Dorsolateral prefrontal cortex (tissue), 120 donors: ENCODE measurements at regions of chr5 and their contacts with region 1.

Region 1: DNA sequence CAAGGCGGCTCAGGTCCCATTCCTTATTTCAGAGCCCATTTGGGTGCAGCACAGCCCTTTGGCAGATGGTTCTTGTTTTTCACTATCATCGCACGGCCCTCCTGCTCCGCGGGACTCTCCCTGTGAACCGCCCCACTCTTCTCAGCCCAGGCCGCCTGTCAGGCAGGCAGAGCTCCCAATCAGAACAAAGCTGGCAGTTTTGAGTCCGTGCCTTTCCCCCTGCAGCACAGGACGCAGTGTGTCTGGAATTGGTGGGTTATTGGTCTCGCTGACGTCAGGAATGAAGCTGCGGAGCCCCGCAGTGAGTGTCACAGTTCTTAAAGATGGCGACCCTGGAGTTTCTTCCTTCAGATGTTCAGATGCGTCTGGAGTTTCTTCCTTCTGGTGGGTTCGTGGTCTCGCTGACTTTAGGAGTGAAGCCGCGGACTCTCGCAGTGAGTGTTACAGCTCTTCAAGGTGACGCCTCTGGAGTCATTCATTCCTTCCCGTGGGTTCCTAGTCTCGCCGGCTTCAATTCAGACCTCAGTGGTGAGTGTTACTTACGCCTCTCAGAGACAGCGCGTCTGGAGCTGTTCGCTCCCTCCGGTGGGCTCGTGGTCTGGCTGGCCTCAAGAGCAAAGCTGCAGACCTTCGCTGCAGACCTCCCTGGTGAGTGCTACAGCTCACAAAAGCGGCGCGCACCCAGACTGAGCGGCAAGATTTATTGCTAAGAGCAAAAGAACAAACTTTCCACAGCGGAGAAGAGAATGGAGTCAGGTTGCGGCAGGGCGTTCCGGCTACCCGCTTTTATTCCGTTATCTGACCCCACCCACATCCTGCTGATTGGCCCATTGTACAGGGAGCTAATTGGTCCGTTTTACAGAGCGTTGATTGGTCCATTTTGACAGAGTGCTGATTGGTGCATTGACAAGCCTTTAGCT is 7.5 kb downstream of the ZDHHC11B start:
- DNase-seq: peak in 3 of 10 donors; percentile 27 to 45 (median 33)
- H3K4me3 ChIP-seq: no peak overlapping the region
- H3K27ac ChIP-seq: peak overlapping the region in 12 of 59 donors; percentile 2 to 67 (median 33)
- H3K27me3 ChIP-seq: no peaks in the 10 kb centered on the region
- CTCF ChIP-seq: no peak

Region 2: GRCh38 chr5:683551-684481 is 93.2 kb before region 1 on chr5:
- intact Hi-C with region 1: loop called (anchors 2 to 5 kb)
- DNase-seq: peak in 7 of 10 donors; percentile 10 to 45 (median 29)
- H3K4me3 ChIP-seq: peak overlapping the region in 5 of 59 donors; percentile 10 to 47 (median 32)
- H3K27ac ChIP-seq: peak overlapping the region in 48 of 59 donors; percentile 4 to 82 (median 62)
- H3K27me3 ChIP-seq: no peaks in the 10 kb centered on the region
- CTCF ChIP-seq: no peak

Region 3: DNA sequence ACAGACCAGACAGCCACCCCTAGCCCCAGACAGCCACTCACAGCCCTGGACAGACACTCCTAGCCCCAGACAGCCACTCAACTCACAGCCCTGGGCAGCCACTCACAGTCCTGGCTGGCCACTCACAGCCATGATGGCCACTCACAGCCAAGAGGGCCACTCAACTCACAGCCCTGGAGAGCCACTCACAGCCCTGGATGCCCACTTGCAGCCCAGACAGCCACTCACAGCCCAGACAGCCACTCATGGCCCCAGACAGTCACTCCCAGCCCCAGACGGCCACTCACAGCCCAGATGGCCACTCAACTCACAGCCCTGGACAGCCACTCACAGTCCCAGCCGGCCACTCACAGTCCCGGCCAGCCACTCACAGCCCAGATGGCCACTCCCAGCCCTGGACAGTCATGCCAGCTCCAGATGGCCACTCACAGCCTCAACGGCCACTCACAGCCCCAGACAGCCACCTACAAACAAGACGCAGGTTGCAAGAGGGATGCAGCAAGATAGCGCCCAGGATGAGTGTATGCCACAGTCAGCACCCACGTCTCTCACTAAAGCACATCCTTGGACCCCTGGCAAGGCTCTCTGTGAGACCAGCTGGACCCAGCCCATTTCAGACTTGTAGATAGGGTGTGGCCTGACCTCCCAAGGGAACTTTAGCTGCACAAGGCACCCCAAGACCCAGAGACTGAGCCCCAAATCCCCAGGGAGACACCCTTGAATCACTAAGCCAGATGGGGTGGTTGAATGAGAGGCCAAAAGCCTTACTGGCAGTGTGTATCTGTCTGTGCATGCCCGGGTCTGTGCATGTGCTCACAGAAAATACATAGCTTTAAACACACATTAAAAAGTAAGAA is 15.0 kb before region 1 on chr5:
- intact Hi-C with region 1: loop called in 1 of 2 experiments (anchors 1 kb)
- DNase-seq: peak; percentile 51 to 82 (median 72)
- H3K4me3 ChIP-seq: no peak overlapping the region
- H3K27ac ChIP-seq: peak overlapping the region in 5 of 59 donors; percentile 2 to 59 (median 9)
- H3K27me3 ChIP-seq: no peaks in the 10 kb centered on the region
- CTCF ChIP-seq: no peak

Region 4: DNA sequence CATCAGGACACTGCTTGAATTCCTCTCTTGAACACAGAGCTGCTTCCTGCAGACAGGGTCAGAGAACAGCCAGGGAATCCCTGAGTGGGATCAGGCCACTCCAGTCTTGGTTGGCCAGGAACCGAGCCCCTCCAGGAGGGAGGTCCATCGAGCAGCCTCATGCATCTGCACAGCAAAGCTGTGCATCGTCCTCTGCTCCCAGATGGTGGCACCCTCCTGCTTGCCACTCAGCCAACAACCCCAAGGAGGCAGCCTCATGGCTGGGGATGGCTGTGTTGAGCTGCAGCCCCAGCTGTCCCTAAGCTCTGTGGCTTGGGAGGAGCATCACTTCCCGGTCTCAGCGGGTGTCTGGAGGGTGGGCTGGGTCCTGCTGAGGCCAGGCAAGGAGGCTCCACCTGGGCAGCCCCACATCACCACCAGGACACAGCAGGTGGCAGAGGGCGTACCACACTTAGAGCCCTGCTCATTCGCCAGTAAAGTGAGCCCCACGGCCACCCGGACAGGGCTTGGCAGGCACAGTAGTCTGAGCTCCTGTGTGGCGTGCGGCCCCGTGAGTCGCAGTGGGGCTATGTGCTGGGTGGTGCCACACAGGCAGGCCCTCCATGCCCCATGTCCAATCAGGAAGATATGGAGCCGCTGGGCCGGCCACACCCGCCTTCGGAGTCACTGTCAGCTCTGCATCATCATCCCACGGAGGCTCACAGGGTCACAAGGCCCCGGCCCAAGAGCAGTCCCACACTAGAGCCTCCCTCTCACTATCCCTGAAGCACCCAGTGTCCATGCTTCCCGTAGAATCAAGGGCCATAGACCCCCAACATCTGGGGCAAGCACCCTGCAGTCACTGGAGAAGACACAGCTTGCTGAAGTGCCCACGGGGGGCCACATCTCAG is 734.8 kb after region 1 on chr5:
- intact Hi-C with region 1: no loop called
- DNase-seq: peak in 9 of 10 donors; percentile 19 to 60 (median 45)
- H3K4me3 ChIP-seq: no peak overlapping the region
- H3K27ac ChIP-seq: no peak overlapping the region
- H3K27me3 ChIP-seq: no peaks in the 10 kb centered on the region
- CTCF ChIP-seq: peak in 39 of 56 donors; percentile 6 to 47 (median 24)